ENCODE measurements at regions of chr17 and their contacts with region 1.

Region 1: GRCh38 chr17:44210342-44211192 is 8.9 kb downstream of the UBTF start:
- DNase-seq: peak; percentile 93 to 96
- ATAC-seq: peak; percentile 91
- H3K4me3 ChIP-seq: no peak overlapping the region
- H3K27ac ChIP-seq: no peak overlapping the region
- H3K4me1 ChIP-seq: no peaks in the 10 kb centered on the region
- H3K27me3 ChIP-seq: no peaks in the 10 kb centered on the region

Region 2: DNA sequence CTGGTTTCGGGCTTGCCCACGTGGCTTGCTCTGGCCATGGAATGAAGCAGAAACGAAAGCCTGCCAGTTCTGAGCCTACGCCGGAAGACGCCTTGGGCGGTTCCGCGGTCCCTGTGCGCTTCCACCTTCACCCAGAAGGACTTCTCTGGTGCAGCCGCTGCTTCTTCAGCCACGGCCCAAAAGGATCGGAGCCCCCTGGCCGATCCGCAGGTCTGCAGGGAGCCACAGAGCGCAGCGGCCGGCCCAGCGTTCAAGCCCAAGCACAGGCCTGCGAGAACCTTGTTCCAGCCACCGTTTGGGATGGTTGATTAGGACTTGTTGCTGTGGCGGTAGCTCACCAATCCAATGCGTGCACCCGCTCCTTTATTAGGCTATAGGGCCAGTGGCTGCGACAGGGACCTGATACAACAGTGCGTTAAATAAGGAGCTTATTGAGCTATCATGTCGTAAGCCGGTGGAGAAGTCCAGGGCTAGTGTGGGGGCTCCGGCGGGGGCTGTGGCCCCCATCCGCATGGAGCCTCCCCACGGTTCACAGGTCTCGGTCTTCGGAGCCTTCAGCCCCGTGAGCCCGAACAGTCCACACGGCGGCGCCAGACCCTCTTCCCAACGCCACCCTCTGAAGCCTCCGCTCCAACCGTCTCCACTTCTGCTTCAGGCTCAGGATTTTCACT is 293.1 kb before region 1 on chr17:
- intact Hi-C with region 1: no loop called
- DNase-seq: peak; percentile 72 to 88
- ATAC-seq: peak; percentile 68
- H3K4me3 ChIP-seq: no peak overlapping the region
- H3K27ac ChIP-seq: no peak overlapping the region
- H3K4me1 ChIP-seq: no peaks in the 10 kb centered on the region
- H3K27me3 ChIP-seq: no peaks in the 10 kb centered on the region

Region 3: DNA sequence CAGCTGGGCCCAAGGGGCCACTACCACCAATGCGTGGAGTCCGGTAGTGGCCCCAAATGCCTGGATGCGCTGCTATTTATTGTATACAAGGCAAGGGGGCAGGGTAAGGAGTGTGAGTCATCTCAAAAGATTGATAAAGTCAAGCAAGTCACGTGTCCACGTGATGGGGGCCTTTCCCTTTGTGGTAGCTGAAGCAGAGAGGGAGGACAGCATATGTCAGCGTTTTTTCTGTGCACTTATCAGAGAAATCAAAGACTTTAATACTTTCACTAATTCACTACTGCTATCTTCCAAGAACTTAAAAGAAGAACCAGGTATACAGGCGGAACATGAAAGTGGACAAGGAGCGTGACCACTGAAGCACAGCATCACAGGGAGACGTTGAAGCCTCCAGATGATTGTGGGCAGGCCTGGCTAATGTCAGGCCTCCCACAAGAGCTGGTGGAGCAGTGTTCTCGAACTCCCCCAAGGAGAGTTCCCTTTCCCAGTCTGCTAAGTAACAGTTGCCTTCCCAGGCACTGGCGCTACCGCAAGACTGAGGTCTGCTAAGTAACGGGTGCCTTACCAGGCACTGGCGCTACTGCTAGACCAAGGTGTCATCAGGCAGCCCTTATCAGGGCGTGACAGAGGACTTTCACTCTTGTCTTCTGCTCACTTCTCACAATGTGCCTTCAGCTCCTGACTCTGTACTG is 50.9 kb before region 1 on chr17:
- intact Hi-C with region 1: no loop called
- DNase-seq: no peak
- ATAC-seq: no peak
- H3K4me3 ChIP-seq: no peak overlapping the region
- H3K27ac ChIP-seq: no peak overlapping the region
- H3K4me1 ChIP-seq: no peaks in the 10 kb centered on the region
- H3K27me3 ChIP-seq: no peaks in the 10 kb centered on the region

Region 4: DNA sequence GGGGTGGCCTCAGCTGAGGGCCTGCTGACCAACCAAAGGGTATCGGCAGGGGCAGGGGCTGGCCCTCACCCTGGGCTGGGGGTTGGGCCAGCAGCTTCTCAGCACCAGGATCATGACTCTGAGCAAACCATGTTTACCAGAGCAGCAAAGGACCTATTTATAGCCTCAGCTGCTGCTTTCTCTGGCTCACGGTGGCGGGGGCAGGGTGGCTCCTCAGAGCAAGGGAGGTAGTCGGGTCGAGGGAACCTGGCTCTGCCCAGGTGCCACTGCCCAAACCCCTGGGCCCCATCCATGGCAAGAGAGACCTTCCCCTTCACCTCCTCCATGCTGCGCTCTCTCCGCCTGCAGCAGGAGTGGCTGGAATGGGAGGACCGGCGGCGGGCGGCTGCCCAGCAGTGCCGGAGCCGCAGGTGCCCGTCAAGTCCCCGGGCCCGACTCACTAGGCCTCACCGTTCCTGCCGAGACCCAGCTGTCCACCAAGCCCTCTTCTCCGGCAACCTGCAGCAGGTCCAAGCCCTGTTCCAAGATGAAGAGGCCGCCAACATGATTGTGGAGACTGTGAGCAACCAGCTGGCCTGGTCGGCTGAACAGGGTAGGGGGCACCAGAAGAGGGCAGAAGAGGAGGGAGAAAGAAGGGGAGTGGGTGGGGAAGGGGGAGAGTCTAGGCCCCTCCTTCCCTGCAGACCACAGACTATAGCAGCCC is 39.9 kb before region 1 on chr17 and contains the start of gene ASB16:
- intact Hi-C with region 1: no loop called
- DNase-seq: peak in 1 of 2 donors; percentile 61
- ATAC-seq: peak; percentile 65
- H3K4me3 ChIP-seq: peak within 1 kb of the TSS in 1 of 2 donors; percentile 16
- H3K27ac ChIP-seq: peak within 1 kb of the TSS; percentile 3 to 11
- H3K4me1 ChIP-seq: no peaks in the 10 kb centered on the region
- H3K27me3 ChIP-seq: no peaks in the 10 kb centered on the region
- total RNA-seq, gene ASB16: 1.4 to 2.1 TPM

Region 5: GRCh38 chr17:44331249-44331760 is 120.7 kb after region 1 on chr17:
- intact Hi-C with region 1: loop called in 1 of 2 experiments (anchors 1 kb)
- DNase-seq: no peak
- ATAC-seq: no peak
- H3K4me3 ChIP-seq: no peak overlapping the region
- H3K27ac ChIP-seq: no peak overlapping the region
- H3K4me1 ChIP-seq: no peaks in the 10 kb centered on the region
- H3K27me3 ChIP-seq: no peaks in the 10 kb centered on the region

Measured in aorta (tissue), 5 donors.